ENCODE measurements at regions of chr11 and their contacts with region 1.

Region 1: GRCh38 chr11:66704726-66705360 is 24.2 kb downstream of the SPTBN2 start:
- DNase-seq: no peak
- H3K4me3 ChIP-seq: no peak overlapping the region
- H3K27ac ChIP-seq: no peak overlapping the region
- H3K4me1 ChIP-seq: no peaks in the 10 kb centered on the region
- H3K27me3 ChIP-seq: no peaks in the 10 kb centered on the region
- CTCF ChIP-seq: no peak

Region 2: GRCh38 chr11:66530927-66531709 is 173.7 kb before region 1 on chr11:
- CTCF ChIA-PET with region 1: no interaction called
- dilution Hi-C with region 1: no loop called
- in situ Hi-C with region 1: no loop called
- intact Hi-C with region 1: no loop called
- DNase-seq: no peak
- H3K4me3 ChIP-seq: no peak overlapping the region
- H3K27ac ChIP-seq: no peak overlapping the region
- H3K4me1 ChIP-seq: no peaks in the 10 kb centered on the region
- H3K27me3 ChIP-seq: no peaks in the 10 kb centered on the region
- CTCF ChIP-seq: no peak

Region 3: DNA sequence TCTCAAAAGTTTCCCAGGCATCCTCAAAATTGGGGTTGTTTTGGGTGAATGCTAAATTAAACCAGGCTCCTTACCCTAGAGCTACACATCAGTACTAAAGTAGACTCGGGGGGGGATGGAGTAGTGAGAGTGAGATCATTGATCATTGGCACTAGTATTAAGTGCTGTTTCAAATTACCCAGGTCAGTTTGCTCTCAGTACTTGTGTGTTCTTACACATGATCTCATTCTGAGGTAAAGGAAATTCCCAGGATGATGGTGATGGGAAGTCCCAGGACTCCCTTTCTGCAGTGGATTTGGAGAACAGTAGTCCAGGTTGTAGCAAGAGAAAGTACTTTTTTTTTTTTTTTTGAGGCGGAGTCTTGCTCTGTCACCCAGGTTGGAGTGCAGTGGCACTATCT is 53.8 kb before region 1 on chr11:
- CTCF ChIA-PET with region 1: no interaction called
- dilution Hi-C with region 1: no loop called
- in situ Hi-C with region 1: no loop called
- intact Hi-C with region 1: no loop called
- DNase-seq: peak; percentile 72
- H3K4me3 ChIP-seq: no peak overlapping the region
- H3K27ac ChIP-seq: no peak overlapping the region
- H3K4me1 ChIP-seq: peaks cover 8% of the 10 kb centered on the region
- H3K27me3 ChIP-seq: no peaks in the 10 kb centered on the region
- CTCF ChIP-seq: no peak

Region 4: GRCh38 chr11:66752148-66752547 is 47.3 kb after region 1 on chr11:
- CTCF ChIA-PET with region 1: no interaction called
- dilution Hi-C with region 1: loop called (anchors 5 kb)
- in situ Hi-C with region 1: no loop called
- intact Hi-C with region 1: no loop called
- DNase-seq: no peak
- H3K4me3 ChIP-seq: no peak overlapping the region
- H3K27ac ChIP-seq: no peak overlapping the region
- H3K4me1 ChIP-seq: peaks cover 11% of the 10 kb centered on the region
- H3K27me3 ChIP-seq: no peaks in the 10 kb centered on the region
- CTCF ChIP-seq: no peak

Region 5: GRCh38 chr11:66815646-66816045 is 110.8 kb after region 1 on chr11:
- CTCF ChIA-PET with region 1: no interaction called
- dilution Hi-C with region 1: loop called (anchors 5 kb)
- in situ Hi-C with region 1: no loop called
- intact Hi-C with region 1: no loop called
- DNase-seq: peak; percentile 75
- H3K4me3 ChIP-seq: no peak overlapping the region
- H3K27ac ChIP-seq: peak overlapping the region; percentile 61
- H3K4me1 ChIP-seq: peaks cover 21% of the 10 kb centered on the region
- H3K27me3 ChIP-seq: no peaks in the 10 kb centered on the region
- CTCF ChIP-seq: no peak

Region 6: DNA sequence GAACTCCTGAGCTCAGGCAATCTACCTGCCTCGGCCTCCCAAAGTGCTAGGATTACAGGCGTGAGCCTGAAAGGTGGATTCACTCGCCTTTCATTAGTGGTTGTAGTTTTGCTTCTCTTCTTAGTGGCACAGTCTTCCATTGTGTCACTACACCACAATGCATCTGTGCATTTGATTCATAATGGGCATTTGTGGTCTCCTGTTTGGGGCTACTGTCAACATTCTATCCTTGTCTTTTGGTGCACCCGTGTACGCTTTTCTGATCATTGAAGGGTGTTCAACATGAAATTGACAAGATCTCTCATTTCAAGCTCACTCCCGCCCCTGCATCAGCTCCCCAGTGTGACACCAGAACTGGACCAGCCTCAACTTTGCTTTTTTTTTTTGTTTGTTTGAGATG is 316.1 kb after region 1 on chr11:
- CTCF ChIA-PET with region 1: no interaction called
- dilution Hi-C with region 1: no loop called
- in situ Hi-C with region 1: no loop called
- intact Hi-C with region 1: no loop called
- DNase-seq: no peak
- H3K4me3 ChIP-seq: no peak overlapping the region
- H3K27ac ChIP-seq: no peak overlapping the region
- H3K4me1 ChIP-seq: peaks cover 35% of the 10 kb centered on the region
- H3K27me3 ChIP-seq: no peaks in the 10 kb centered on the region
- CTCF ChIP-seq: no peak

Measured in mammary epithelial cell (primary cell).